Calu3 (cell line): ENCODE measurements at regions of chr1 and their contacts with region 1.

Region 1: DNA sequence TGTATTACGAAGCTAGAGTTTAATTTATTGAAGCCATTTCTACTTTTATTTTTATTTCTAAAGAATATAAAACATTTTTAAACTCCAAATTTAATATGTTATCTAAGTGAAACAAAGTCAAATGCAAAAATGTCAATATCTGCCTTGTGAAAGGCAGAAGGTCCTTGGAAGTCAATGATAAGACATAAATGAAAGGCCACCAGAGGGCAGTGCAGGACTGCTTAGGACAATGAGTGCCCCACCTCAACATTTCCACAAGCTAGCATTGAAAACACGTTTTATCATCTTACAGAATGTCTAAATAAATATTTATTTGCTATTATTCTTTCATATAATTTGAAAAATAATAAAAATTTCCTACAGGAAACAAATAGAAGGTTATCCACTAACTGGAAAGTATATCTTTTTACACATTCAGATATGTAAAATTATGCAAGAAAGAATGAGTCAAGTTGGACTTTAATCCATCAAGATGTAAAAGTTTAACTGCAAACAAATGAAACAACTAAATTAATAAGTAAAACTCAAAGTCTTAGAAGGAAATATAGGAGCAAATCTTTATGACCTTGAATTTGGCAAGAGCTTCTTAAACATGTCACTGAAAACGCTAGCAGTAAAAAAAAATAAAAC is 140.1 kb upstream of the FMN2 start:
- DNase-seq: peak; percentile 83
- H3K4me3 Mint-ChIP-seq: peak overlapping the region; percentile 59
- H3K27ac Mint-ChIP-seq: no peak overlapping the region
- H3K4me1 Mint-ChIP-seq: peaks cover 7% of the 10 kb centered on the region
- H3K27me3 Mint-ChIP-seq: no peaks in the 10 kb centered on the region
- CTCF ChIP-seq: peak; percentile 85

Region 2: GRCh38 chr1:239831577-239832355 is 119.9 kb before region 1 on chr1:
- CTCF ChIA-PET with region 1: no interaction called
- intact Hi-C with region 1: no loop called
- DNase-seq: no peak
- H3K4me3 Mint-ChIP-seq: no peak overlapping the region
- H3K27ac Mint-ChIP-seq: no peak overlapping the region
- H3K4me1 Mint-ChIP-seq: peaks cover 14% of the 10 kb centered on the region
- H3K27me3 Mint-ChIP-seq: no peaks in the 10 kb centered on the region
- CTCF ChIP-seq: no peak

Region 3: DNA sequence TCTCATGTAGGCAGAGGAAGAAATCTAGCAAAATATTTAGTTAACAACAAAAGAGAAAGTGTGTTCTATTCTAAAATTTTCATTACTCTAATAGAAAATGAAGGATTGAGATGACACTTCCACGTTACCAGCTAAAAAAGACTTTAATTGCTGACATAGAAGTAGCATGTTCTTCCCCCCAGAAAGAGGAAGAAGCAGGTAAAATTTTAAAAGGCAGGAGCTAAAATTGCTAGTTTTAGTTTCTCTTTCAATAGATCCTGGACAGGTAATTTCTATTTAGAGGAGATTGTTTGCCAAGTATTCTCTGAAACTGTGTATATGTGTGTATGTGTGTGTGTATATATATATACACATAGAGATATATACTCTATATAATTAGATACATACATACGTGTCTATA is 108.1 kb before region 1 on chr1:
- CTCF ChIA-PET with region 1: no interaction called
- intact Hi-C with region 1: no loop called
- DNase-seq: no peak
- H3K4me3 Mint-ChIP-seq: no peak overlapping the region
- H3K27ac Mint-ChIP-seq: no peak overlapping the region
- H3K4me1 Mint-ChIP-seq: no peaks in the 10 kb centered on the region
- H3K27me3 Mint-ChIP-seq: no peaks in the 10 kb centered on the region
- CTCF ChIP-seq: no peak

Region 4: GRCh38 chr1:239930686-239931262 is 20.9 kb before region 1 on chr1:
- CTCF ChIA-PET with region 1: interaction called, 10 read pairs
- intact Hi-C with region 1: no loop called
- DNase-seq: no peak
- H3K4me3 Mint-ChIP-seq: no peak overlapping the region
- H3K27ac Mint-ChIP-seq: peak overlapping the region; percentile 33
- H3K4me1 Mint-ChIP-seq: peaks cover 23% of the 10 kb centered on the region
- H3K27me3 Mint-ChIP-seq: no peaks in the 10 kb centered on the region
- CTCF ChIP-seq: no peak

Region 5: DNA sequence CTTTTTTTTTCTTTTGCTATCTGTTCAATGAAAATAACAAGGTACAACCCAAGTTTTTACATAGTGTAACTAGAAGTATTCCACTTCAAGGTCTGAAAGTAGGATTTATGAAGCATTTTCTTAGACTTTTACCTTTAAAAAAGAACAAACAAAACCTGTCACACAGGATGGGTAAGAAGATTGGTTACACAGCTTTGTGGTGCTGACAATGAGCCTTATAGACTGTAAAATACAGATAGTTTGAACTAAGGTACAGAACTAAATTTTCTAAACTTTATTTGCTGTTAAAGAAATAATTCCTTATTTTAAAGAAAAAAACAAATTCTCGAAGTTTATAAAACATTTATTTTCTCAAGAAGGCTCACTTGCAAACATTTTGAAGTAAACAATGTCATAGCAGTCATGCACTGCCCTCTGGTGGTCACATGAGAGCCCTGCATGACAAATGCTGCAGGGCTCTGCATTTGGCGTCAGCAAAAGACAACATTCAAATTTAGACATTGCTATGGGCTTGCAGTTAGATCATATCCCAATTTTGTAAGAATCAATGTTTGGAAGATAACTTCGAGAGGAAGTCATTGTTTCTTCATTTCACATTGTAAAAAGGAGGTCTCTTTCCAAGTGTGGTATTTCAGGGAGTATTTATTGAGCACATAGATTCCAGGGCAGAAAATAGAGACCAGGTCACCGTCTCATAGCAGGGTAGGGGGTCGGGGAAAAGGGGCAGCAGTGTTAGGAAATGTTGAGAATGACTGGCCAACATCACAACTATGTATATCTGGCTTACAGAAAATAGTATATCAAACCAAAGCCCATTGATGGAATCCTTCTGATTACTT is 24.7 kb after region 1 on chr1:
- CTCF ChIA-PET with region 1: interaction called, 21 read pairs
- intact Hi-C with region 1: loop called (anchors 1 kb)
- DNase-seq: peak; percentile 73
- H3K4me3 Mint-ChIP-seq: no peak overlapping the region
- H3K27ac Mint-ChIP-seq: no peak overlapping the region
- H3K4me1 Mint-ChIP-seq: no peaks in the 10 kb centered on the region
- H3K27me3 Mint-ChIP-seq: peaks cover 11% of the 10 kb centered on the region
- CTCF ChIP-seq: peak; percentile 95

Region 6: DNA sequence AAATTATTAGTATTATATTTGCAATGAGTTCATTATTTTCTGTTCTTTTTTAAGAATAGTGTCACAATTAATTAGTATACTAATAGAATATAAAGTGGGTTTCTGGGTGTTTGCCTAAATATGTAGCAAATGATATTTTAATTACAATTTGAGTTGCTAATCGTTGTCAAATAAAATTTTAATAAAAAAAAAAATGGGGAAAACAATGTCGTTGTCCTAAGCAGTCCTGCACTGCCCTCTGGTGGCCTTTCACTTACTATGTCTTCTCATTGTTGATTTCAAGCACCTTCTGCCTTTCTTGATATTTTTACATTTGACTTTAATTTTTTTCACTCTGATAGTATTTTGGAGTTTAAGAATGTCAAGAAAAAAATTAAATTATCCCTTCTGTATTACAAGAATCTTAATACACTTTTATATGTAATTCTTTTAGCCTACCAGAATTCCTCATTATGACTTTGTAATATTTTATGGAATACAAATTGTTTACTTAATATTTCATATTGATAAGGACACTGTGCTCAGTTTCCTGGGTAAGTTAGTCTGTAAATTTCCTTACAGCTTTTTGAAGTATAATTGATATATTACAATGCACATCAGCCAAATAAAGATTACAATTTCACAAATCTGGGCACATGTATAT is 35.6 kb after region 1 on chr1:
- CTCF ChIA-PET with region 1: interaction called, 3 read pairs
- intact Hi-C with region 1: loop called (anchors 1 kb)
- DNase-seq: peak; percentile 65
- H3K4me3 Mint-ChIP-seq: no peak overlapping the region
- H3K27ac Mint-ChIP-seq: no peak overlapping the region
- H3K4me1 Mint-ChIP-seq: no peaks in the 10 kb centered on the region
- H3K27me3 Mint-ChIP-seq: peaks cover 33% of the 10 kb centered on the region
- CTCF ChIP-seq: peak; percentile 70

Region 7: GRCh38 chr1:240004086-240004749 is 52.6 kb after region 1 on chr1:
- CTCF ChIA-PET with region 1: interaction called, 10 read pairs
- intact Hi-C with region 1: no loop called
- DNase-seq: peak; percentile 30
- H3K4me3 Mint-ChIP-seq: no peak overlapping the region
- H3K27ac Mint-ChIP-seq: no peak overlapping the region
- H3K4me1 Mint-ChIP-seq: no peaks in the 10 kb centered on the region
- H3K27me3 Mint-ChIP-seq: no peaks in the 10 kb centered on the region
- CTCF ChIP-seq: peak; percentile 73

Region 8: GRCh38 chr1:240027059-240027462 is 75.4 kb after region 1 on chr1:
- CTCF ChIA-PET with region 1: no interaction called
- intact Hi-C with region 1: no loop called
- DNase-seq: peak; percentile 56
- H3K4me3 Mint-ChIP-seq: no peak overlapping the region
- H3K27ac Mint-ChIP-seq: no peak overlapping the region
- H3K4me1 Mint-ChIP-seq: peaks cover 25% of the 10 kb centered on the region
- H3K27me3 Mint-ChIP-seq: no peaks in the 10 kb centered on the region
- CTCF ChIP-seq: peak; percentile 90

Region 9: GRCh38 chr1:240149484-240150094 is 198.0 kb after region 1 on chr1:
- CTCF ChIA-PET with region 1: no interaction called
- intact Hi-C with region 1: no loop called
- DNase-seq: peak; percentile 34
- H3K4me3 Mint-ChIP-seq: no peak overlapping the region
- H3K27ac Mint-ChIP-seq: no peak overlapping the region
- H3K4me1 Mint-ChIP-seq: no peaks in the 10 kb centered on the region
- H3K27me3 Mint-ChIP-seq: peaks cover 17% of the 10 kb centered on the region
- CTCF ChIP-seq: peak; percentile 64